ENCODE measurements at regions of chr1 and their contacts with region 1.

Region 1: DNA sequence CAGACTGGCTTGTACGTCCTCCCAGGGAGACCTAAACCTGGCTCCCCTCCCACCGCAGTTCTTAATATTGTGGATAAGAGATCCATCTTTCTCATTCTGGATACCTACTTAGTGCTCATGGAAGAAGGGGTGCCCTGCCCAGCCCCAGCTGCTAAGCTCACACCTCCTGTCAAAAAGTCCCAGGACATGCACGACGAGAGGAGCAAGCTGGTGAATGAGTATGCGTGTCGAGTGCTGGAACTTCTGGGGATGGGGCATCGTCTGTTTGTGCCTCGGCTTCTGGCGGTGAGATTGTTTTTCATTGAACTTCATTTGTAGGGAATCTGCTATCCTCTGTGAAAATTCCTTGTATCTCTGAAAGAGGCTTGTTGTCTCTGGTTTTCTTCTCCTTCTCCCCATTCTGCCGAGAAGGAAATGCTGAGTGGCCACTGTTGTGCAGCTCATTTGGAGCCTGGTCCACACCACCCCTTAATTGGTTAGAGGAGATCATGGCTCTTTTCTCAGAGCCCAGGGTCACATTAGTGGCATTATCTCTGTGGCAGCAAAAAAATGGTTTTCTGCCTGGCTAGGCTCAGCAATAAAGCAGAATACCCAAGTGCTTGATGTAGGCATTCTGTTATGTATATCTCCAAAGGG is 199.4 kb upstream of the CACYBP start:
- DNase-seq: peak; percentile 23
- ATAC-seq: peak; percentile 24
- H3K4me3 Mint-ChIP-seq: no peak overlapping the region
- H3K27ac Mint-ChIP-seq: no peak overlapping the region
- H3K4me1 Mint-ChIP-seq: peaks cover 5% of the 10 kb centered on the region
- H3K27me3 Mint-ChIP-seq: no peaks in the 10 kb centered on the region

Region 2: DNA sequence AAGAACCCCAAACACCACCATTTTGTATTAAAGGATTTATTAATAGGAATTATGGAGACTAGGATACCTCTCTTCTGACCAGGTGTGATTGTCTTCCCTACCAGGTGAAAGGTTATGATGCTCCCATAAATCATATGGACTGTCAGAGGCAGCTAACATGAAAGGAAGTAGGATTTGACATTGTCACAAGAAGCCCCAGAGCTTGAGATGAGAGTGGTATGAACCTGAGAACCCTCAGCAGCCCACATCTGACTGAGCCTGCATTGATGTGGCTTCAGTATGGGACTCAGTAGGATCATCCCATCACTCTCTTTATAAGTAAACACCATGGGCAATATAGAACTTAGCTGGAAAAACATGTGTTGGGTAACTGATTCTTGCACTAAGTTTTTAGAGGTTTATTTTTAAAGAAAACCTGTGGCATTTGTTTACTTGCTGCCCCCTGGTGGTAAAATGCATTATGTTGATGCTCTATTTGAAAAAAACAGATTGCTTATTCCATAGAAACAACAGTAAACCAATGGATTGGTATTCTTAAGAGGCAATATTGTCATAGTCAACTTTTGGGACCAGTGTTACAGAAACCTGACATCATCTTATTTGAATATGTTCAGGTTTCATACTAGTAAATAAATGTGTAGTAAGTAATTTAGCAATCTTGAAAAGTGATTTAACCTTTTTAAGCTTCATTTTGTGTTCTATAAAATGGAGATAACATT is 182.8 kb after region 1 on chr1:
- CTCF ChIA-PET with region 1: interaction called, 14 read pairs
- POLR2A ChIA-PET with region 1: interaction called, 3 read pairs
- DNase-seq: peak; percentile 66
- ATAC-seq: no peak
- H3K4me3 Mint-ChIP-seq: no peak overlapping the region
- H3K27ac Mint-ChIP-seq: no peak overlapping the region
- H3K4me1 Mint-ChIP-seq: peaks cover 16% of the 10 kb centered on the region
- H3K27me3 Mint-ChIP-seq: no peaks in the 10 kb centered on the region